Activated CD4-positive, alpha-beta T cell treated with anti-CD3 and anti-CD28 coated beads for 36 hours (primary cell): ENCODE measurements at regions of chr1 and their contacts with region 1.

Region 1: GRCh38 chr1:53837924-53838652 is at the start of gene NDC1:
- DNase-seq: peak; percentile 92
- ATAC-seq: peak; percentile 93
- H3K4me3 Mint-ChIP-seq: peak within 1 kb of the TSS; percentile 100
- H3K27ac Mint-ChIP-seq: peak within 1 kb of the TSS; percentile 96
- H3K4me1 Mint-ChIP-seq: peaks cover 25% of the 10 kb centered on the region
- H3K27me3 Mint-ChIP-seq: peaks cover 2% of the 10 kb centered on the region
- total RNA-seq, gene NDC1: 31.2 to 38.5 TPM

Region 2: DNA sequence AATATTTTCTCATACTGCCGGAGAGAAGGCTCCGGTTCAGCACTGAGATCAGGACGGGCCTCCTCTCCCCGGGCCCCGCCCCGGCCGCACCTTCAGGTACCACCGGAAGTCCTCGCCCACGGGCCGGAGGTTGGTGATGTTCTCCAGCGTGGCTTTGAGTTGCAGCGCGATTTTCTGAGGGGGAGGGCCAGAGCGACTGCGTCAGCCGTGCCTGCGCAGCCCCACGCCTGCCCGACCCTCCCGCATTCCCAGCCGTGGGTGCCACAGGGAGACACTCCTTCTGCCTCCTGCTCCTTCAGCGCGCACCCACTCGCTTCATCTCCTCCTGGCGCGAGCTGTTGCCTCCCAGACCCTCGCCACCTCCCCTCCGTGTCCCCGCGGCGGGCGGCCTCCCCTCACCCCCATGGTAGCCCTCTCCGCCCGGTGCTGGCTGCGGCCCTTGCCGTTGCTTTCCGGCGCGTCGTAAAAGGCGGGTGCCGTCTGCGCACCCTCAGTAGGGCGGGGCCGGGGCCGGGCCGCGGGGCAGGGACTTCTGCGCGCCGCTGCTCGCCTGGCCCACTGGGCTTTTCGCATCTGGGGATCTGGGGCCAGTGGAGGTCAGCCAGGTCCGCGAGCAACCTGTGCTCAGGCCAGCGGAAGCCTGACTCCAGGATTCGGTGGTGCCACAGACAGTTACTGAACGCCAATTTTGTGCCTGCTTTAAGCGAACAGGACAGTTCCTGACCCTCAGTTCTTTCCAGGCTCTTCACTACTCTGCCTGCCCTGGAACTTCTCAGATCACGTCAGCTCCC is 617.7 kb before region 1 on chr1 and contains the start of gene CZIB:
- CTCF ChIA-PET with region 1: no interaction called
- POLR2A ChIA-PET with region 1: no interaction called
- intact Hi-C with region 1: loop called in 1 of 2 experiments (anchors 1 kb)
- DNase-seq: peak; percentile 98
- ATAC-seq: peak; percentile 95
- H3K4me3 Mint-ChIP-seq: peak within 1 kb of the TSS; percentile 87
- H3K27ac Mint-ChIP-seq: peak within 1 kb of the TSS; percentile 94
- H3K4me1 Mint-ChIP-seq: peaks cover 24% of the 10 kb centered on the region
- H3K27me3 Mint-ChIP-seq: no peaks in the 10 kb centered on the region
- total RNA-seq, gene CZIB: 45.4 to 48.7 TPM

Region 3: DNA sequence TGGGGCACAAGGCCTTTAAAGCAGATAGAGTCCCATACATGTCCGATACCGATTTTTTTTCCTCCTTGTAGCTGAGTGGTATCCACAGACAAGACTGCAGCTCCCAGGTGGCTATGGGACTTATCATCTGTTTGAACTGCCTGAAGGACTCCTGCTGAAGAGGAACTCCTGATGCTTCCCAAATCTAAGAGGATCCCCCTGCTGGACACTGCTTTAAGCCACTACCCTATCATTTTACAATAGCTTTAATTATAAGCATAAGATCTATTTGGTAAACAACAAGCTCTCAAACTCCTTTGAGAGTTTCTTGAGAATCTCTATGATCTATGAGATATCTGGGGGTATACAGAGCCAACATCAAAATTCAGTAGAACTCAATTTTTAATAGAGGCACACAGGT is 11.7 kb before region 1 on chr1:
- CTCF ChIA-PET with region 1: no interaction called
- POLR2A ChIA-PET with region 1: no interaction called
- intact Hi-C with region 1: no loop called
- DNase-seq: no peak
- ATAC-seq: no peak
- H3K4me3 Mint-ChIP-seq: no peak overlapping the region
- H3K27ac Mint-ChIP-seq: no peak overlapping the region
- H3K4me1 Mint-ChIP-seq: no peaks in the 10 kb centered on the region
- H3K27me3 Mint-ChIP-seq: no peaks in the 10 kb centered on the region

Region 4: DNA sequence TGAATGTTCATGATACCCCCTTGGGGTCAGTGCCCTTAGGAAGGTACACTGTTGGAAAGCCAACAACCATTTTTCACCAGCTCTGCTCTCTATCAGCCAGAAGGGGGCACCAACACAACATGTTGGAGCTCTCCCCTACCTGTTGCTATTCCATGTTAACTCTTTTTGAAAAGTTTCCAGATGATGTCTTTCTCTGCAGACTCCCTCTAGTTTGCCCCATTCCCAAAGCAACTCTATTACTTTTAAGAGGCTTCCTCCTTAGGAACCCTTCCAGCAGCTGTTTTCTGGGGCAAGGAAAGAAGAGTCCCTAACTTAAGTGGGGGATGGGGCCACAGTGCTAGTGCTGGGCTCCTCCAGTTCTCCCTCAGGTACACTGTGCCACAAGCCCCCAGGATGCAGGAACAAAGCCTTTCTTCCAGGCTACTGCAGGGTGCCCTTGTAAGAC is 22.9 kb after region 1 on chr1:
- CTCF ChIA-PET with region 1: interaction called, 10 read pairs
- POLR2A ChIA-PET with region 1: interaction called, 3 read pairs
- intact Hi-C with region 1: no loop called
- DNase-seq: peak; percentile 65
- ATAC-seq: peak; percentile 88
- H3K4me3 Mint-ChIP-seq: no peak overlapping the region
- H3K27ac Mint-ChIP-seq: no peak overlapping the region
- H3K4me1 Mint-ChIP-seq: peaks cover 12% of the 10 kb centered on the region
- H3K27me3 Mint-ChIP-seq: no peaks in the 10 kb centered on the region

Region 5: GRCh38 chr1:53945433-53946251 is 107.6 kb after region 1 on chr1 and contains the start of gene IFT25:
- CTCF ChIA-PET with region 1: interaction called, 3 read pairs
- POLR2A ChIA-PET with region 1: no interaction called
- intact Hi-C with region 1: loop called (anchors 1 kb)
- DNase-seq: peak; percentile 99
- ATAC-seq: peak; percentile 79
- H3K4me3 Mint-ChIP-seq: peak within 1 kb of the TSS; percentile 95
- H3K27ac Mint-ChIP-seq: peak within 1 kb of the TSS; percentile 89
- H3K4me1 Mint-ChIP-seq: peaks cover 50% of the 10 kb centered on the region
- H3K27me3 Mint-ChIP-seq: no peaks in the 10 kb centered on the region
- total RNA-seq, gene IFT25: 56.6 to 62.0 TPM

Region 6: GRCh38 chr1:54125386-54126070 is 287.4 kb after region 1 on chr1:
- CTCF ChIA-PET with region 1: no interaction called
- POLR2A ChIA-PET with region 1: no interaction called
- intact Hi-C with region 1: no loop called
- DNase-seq: no peak
- ATAC-seq: no peak
- H3K4me3 Mint-ChIP-seq: no peak overlapping the region
- H3K27ac Mint-ChIP-seq: no peak overlapping the region
- H3K4me1 Mint-ChIP-seq: peaks cover 4% of the 10 kb centered on the region
- H3K27me3 Mint-ChIP-seq: no peaks in the 10 kb centered on the region

Region 7: GRCh38 chr1:54406339-54407153 is 568.5 kb after region 1 on chr1 and contains the start of gene SSBP3:
- CTCF ChIA-PET with region 1: no interaction called
- POLR2A ChIA-PET with region 1: no interaction called
- intact Hi-C with region 1: loop called in 1 of 2 experiments (anchors 5 kb)
- DNase-seq: peak; percentile 95
- ATAC-seq: peak; percentile 84
- H3K4me3 Mint-ChIP-seq: peak within 1 kb of the TSS; percentile 76
- H3K27ac Mint-ChIP-seq: peak within 1 kb of the TSS; percentile 88
- H3K4me1 Mint-ChIP-seq: peaks cover 57% of the 10 kb centered on the region
- H3K27me3 Mint-ChIP-seq: no peaks in the 10 kb centered on the region
- total RNA-seq, gene SSBP3: 40.3 to 64.2 TPM

Region 8: DNA sequence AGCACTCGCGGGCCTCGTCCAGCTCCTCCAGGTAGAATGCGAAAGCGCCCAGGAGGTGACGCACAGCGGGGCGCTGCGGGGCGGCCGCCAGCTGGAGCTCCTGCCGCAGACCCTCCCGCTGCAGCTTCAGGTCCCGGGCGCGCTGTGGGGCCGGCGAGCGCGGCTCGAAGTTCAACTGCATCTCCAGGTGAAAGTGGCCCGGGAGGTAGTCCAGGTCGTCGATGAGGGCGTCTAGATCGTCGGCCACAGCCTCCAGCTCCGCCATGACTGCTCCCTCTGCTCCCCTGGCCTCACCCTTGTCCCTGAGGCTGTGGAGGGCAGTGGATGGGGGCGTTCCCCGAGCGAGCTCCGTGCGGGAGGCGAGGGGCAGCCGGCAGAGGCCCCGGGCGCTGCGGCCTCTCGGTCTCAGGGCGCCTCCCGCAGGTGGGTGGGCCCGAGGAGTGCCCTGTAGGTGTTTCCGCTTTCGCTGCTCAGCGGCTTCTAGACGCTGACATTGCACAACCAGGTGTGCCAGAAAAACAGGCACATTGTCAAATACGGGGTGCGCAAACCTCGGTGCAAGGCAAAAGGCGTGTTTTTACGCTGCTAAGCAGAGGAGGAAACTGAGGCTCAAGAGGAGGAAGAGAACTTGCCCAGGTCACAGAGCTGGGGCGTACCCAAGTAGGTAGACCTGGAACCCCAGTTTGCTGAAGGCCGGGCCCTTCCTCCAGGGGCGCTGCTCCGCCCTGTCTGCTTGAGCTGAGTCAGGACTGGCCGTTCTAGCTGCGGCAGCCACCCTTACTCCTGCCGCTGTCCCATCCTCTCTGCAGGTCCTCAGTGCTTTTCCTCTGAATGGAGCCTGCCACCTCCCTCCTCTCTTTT is 963.0 kb after region 1 on chr1 and contains the start of gene TTC22:
- CTCF ChIA-PET with region 1: interaction called, 3 read pairs
- POLR2A ChIA-PET with region 1: no interaction called
- intact Hi-C with region 1: loop called in 1 of 2 experiments (anchors 2 kb)
- DNase-seq: peak; percentile 87
- ATAC-seq: peak; percentile 60
- H3K4me3 Mint-ChIP-seq: peak within 1 kb of the TSS; percentile 77
- H3K27ac Mint-ChIP-seq: peak within 1 kb of the TSS; percentile 86
- H3K4me1 Mint-ChIP-seq: peaks cover 55% of the 10 kb centered on the region
- H3K27me3 Mint-ChIP-seq: no peaks in the 10 kb centered on the region
- total RNA-seq, gene TTC22: 4.1 to 4.2 TPM